Activated CD8-positive, alpha-beta T cell treated with anti-CD3 and anti-CD28 coated beads, Interleukin-2, amount 10 ng/mL, durations not matched to agents 7 days and 5 days (primary cell): ENCODE measurements at regions of chr1 and their contacts with region 1.

Region 1: GRCh38 chr1:24201941-24202440 is 14.9 kb upstream of the IFNLR1 start:
- DNase-seq: peak; percentile 72
- ATAC-seq: peak; percentile 24
- H3K4me3 Mint-ChIP-seq: no peak overlapping the region
- H3K27ac Mint-ChIP-seq: no peak overlapping the region
- H3K4me1 Mint-ChIP-seq: peaks cover 9% of the 10 kb centered on the region
- H3K27me3 Mint-ChIP-seq: peaks cover 10% of the 10 kb centered on the region

Region 2: DNA sequence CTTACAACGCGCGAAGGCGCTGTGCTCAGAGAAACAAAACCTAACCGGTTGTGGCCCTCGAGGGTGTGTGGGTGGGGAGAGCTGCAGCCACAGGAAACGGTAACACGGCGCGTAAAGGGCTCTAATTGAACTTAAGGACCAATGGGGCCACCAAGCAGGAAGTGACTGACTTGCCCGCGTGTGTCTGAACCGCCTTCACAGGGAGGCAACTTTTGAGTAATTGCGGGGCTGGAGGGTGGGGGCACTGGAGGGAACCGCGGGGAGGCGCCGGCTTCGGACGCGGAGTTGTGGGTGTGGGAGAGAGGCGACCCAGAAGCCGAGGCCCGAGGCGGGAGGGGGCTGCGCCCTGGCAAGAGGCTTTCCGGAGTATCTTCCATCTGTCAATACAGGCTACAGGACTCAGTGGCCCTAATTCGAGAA is 242.9 kb before region 1 on chr1:
- CTCF ChIA-PET with region 1: no interaction called
- POLR2A ChIA-PET with region 1: no interaction called
- DNase-seq: peak; percentile 97
- ATAC-seq: peak; percentile 83
- H3K4me3 Mint-ChIP-seq: peak overlapping the region; percentile 100
- H3K27ac Mint-ChIP-seq: peak overlapping the region; percentile 100
- H3K4me1 Mint-ChIP-seq: peaks cover 66% of the 10 kb centered on the region
- H3K27me3 Mint-ChIP-seq: no peaks in the 10 kb centered on the region

Region 3: DNA sequence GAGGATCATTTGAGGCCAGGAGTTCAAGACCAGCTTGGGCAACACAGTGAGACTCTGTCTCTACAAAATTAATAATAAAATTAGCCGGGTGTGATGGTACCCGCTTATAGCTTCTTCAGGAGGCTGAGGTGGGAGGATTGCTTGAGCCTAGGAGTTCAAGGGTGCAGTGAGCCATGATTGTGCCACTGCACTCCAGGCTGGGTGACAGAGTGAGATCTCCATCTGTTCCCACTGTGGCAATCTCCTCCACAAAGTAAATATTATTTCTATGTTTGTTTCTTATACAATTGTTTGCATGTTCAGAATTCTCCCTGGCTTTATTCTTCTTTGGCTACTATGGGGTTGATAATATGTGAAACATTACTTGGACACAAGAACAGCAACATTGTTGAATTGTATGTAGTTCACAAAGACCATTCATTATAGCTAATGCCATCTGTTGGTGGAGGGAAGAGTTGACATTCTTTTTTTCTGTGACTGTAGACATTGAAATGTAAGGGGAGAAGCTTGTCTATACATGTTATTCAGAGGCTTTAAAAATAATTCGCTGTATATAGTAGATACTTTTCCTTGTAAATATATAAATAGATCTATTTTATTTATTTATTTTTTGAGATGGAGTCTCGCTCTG is 174.0 kb before region 1 on chr1:
- CTCF ChIA-PET with region 1: no interaction called
- POLR2A ChIA-PET with region 1: no interaction called
- DNase-seq: no peak
- ATAC-seq: peak; percentile 42
- H3K4me3 Mint-ChIP-seq: no peak overlapping the region
- H3K27ac Mint-ChIP-seq: no peak overlapping the region
- H3K4me1 Mint-ChIP-seq: no peaks in the 10 kb centered on the region
- H3K27me3 Mint-ChIP-seq: no peaks in the 10 kb centered on the region

Region 4: GRCh38 chr1:24119859-24120756 is 81.9 kb before region 1 on chr1:
- CTCF ChIA-PET with region 1: no interaction called
- POLR2A ChIA-PET with region 1: no interaction called
- DNase-seq: no peak
- ATAC-seq: no peak
- H3K4me3 Mint-ChIP-seq: no peak overlapping the region
- H3K27ac Mint-ChIP-seq: no peak overlapping the region
- H3K4me1 Mint-ChIP-seq: no peaks in the 10 kb centered on the region
- H3K27me3 Mint-ChIP-seq: peaks cover 12% of the 10 kb centered on the region

Region 5: GRCh38 chr1:24130385-24130784 is 71.6 kb before region 1 on chr1:
- CTCF ChIA-PET with region 1: no interaction called
- POLR2A ChIA-PET with region 1: no interaction called
- DNase-seq: no peak
- ATAC-seq: no peak
- H3K4me3 Mint-ChIP-seq: no peak overlapping the region
- H3K27ac Mint-ChIP-seq: no peak overlapping the region
- H3K4me1 Mint-ChIP-seq: no peaks in the 10 kb centered on the region
- H3K27me3 Mint-ChIP-seq: peaks cover 22% of the 10 kb centered on the region

Region 6: DNA sequence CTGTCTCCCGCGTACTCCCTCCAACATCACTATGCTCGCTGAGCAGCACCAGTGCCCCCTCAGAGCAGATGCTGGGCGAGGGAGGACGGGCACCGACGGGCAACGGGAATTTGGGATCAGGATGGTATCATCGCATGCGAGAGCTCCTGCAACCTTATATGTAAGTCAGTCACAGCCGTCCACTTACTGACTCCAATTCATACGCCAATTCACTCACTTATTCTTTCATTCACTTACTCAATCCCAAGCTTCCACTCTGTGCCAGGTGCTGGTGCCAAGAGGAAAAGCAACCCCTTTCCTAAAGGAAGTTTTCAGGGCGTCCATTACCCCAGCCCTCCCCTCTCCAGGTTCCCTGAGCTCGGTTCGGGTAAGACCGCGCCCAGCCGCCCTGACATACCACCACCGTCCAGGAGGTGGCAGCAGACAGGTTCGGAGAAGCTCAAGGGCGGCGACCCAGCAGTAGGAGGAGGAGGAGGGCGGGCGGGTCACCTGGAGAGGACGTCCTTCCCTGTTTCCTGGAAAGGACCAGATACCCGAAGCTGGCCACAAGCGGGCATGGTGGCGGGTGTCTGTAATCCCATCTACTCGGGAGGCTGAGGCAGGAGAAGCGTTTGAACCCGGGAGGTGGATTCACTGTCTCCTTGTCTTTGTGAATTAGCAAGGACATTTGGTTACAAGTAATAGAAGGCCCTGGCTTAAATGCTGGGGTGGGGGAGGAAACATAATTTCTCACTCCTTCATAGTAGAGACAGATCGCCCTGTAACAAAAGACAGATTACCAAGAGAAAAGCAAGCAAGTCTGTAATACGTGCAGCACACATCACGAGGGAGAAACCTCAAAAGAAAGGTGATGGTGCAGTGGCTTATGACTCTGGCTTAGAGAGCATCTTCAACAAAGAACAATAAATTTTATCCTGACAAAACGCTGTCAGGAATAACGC is 51.5 kb before region 1 on chr1:
- CTCF ChIA-PET with region 1: interaction called, 33 read pairs
- POLR2A ChIA-PET with region 1: interaction called, 5 read pairs
- DNase-seq: peak; percentile 91
- ATAC-seq: peak; percentile 99
- H3K4me3 Mint-ChIP-seq: peak overlapping the region; percentile 44
- H3K27ac Mint-ChIP-seq: no peak overlapping the region
- H3K4me1 Mint-ChIP-seq: peaks cover 15% of the 10 kb centered on the region
- H3K27me3 Mint-ChIP-seq: peaks cover 35% of the 10 kb centered on the region

Region 7: DNA sequence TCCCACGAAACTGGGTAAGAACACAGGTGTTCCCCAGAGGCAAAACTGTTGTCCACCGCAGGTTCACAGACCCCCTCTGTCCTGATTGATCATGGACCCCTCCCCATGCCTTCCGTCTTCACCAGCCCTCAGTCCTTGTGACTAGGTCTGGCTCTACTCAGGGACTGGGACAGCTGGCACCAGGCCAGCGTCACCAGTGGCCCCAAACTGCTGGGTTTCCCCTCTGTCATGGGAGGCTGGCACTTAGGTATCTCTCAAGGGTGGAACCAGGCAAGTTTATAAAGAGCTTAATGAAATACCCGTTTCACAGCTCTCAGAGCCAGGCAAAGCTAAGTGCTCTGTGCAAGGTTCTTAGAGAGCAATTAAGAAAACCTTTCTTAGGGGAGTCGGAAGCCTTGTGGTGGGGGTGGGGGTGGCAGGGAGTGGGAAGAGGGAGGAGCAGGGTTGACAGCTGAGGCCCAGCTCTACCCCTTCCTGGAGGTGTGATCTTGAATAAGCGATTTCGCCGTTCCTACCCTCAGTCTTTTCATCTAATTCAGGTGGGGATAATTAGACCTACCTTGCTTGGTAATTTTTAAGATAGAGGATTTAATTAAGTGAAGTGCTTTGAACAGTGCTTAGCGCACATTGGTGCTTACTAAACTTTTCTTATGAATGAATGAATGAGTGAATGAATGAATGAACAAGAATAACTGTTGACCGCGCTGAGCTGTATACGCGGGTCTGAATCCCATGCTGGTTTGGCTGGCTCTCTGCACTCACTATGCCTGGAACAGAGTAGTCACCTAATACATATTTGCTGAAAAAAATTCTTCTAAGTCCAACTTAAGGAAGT is 20.2 kb after region 1 on chr1:
- CTCF ChIA-PET with region 1: interaction called, 11 read pairs
- POLR2A ChIA-PET with region 1: no interaction called
- DNase-seq: no peak
- ATAC-seq: no peak
- H3K4me3 Mint-ChIP-seq: no peak overlapping the region
- H3K27ac Mint-ChIP-seq: no peak overlapping the region
- H3K4me1 Mint-ChIP-seq: no peaks in the 10 kb centered on the region
- H3K27me3 Mint-ChIP-seq: peaks cover 12% of the 10 kb centered on the region

Region 8: GRCh38 chr1:24364975-24365678 is 163.1 kb after region 1 on chr1:
- CTCF ChIA-PET with region 1: interaction called, 12 read pairs
- POLR2A ChIA-PET with region 1: no interaction called
- DNase-seq: peak; percentile 26
- ATAC-seq: peak; percentile 70
- H3K4me3 Mint-ChIP-seq: no peak overlapping the region
- H3K27ac Mint-ChIP-seq: no peak overlapping the region
- H3K4me1 Mint-ChIP-seq: peaks cover 9% of the 10 kb centered on the region
- H3K27me3 Mint-ChIP-seq: no peaks in the 10 kb centered on the region

Region 9: GRCh38 chr1:24403806-24404205 is 201.8 kb after region 1 on chr1:
- CTCF ChIA-PET with region 1: interaction called, 82 read pairs
- POLR2A ChIA-PET with region 1: no interaction called
- DNase-seq: no peak
- ATAC-seq: no peak
- H3K4me3 Mint-ChIP-seq: no peak overlapping the region
- H3K27ac Mint-ChIP-seq: no peak overlapping the region
- H3K4me1 Mint-ChIP-seq: no peaks in the 10 kb centered on the region
- H3K27me3 Mint-ChIP-seq: no peaks in the 10 kb centered on the region

Region 10: GRCh38 chr1:24830680-24831272 is 628.8 kb after region 1 on chr1:
- CTCF ChIA-PET with region 1: interaction called, 11 read pairs
- POLR2A ChIA-PET with region 1: no interaction called
- DNase-seq: no peak
- ATAC-seq: peak; percentile 51
- H3K4me3 Mint-ChIP-seq: no peak overlapping the region
- H3K27ac Mint-ChIP-seq: no peak overlapping the region
- H3K4me1 Mint-ChIP-seq: no peaks in the 10 kb centered on the region
- H3K27me3 Mint-ChIP-seq: peaks cover 7% of the 10 kb centered on the region